ENCODE measurements at regions of chr11 and their contacts with region 1.

Region 1: DNA sequence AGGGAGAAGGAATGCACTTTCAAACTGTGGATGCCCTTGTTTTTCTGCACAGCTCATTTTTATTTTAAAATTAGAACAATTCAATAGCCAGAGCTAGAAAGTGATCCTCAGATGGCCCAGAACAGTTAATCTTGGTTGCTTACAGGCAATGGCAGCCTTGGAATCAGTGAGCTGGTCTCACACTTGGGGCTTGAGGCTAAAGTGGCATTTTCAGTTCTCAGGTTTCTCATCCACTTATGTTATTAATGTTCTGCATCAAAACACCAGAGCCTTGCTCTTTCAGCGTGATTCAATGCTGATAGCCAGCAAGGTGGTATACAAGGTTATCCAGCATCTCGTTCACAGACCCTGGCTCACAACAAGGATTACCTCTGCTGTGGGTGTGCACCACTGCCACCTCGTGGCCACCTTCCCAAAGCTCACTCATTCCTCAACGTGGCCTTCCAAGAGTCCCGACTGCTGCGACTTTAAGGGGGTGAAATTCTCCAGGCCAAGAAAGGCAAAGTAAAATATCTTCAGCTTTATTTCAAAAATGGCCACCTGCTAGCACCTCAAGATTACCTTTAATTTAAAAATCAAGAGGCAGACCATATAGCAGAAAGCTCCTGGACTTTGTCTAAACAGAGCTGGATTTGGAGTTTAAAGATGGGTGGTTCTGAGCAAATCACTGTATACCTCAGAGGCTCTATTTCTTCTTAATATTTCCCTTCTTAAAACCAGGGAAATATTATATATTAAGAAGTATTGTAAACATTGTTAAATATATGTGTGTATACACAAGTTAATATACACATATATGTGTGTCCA is 34.2 kb upstream of the FSHB start:
- DNase-seq: peak; percentile 69 to 78 (median 72)
- ATAC-seq: peak; percentile 78
- H3K4me3 ChIP-seq: no peak overlapping the region
- H3K27ac ChIP-seq: no peak overlapping the region
- H3K4me1 ChIP-seq: no peaks in the 10 kb centered on the region
- H3K27me3 ChIP-seq: no peaks in the 10 kb centered on the region
- CTCF ChIP-seq: peak; percentile 58 to 77 (median 71)
- POLR2A ChIP-seq: no peak

Region 2: GRCh38 chr11:30131535-30131934 is 65.1 kb before region 1 on chr11:
- intact Hi-C with region 1: loop called (anchors 10 kb)
- DNase-seq: peak in 2 of 4 donors; percentile 25 to 32
- ATAC-seq: peak; percentile 62
- H3K4me3 ChIP-seq: no peak overlapping the region
- H3K27ac ChIP-seq: no peak overlapping the region
- H3K4me1 ChIP-seq: no peaks in the 10 kb centered on the region
- H3K27me3 ChIP-seq: no peaks in the 10 kb centered on the region
- CTCF ChIP-seq: peak in 5 of 7 experiments; percentile 10 to 69 (median 35)
- POLR2A ChIP-seq: no peak

Measured in body of pancreas (tissue), 4 donors.